MCF 10A (cell line): ENCODE measurements at regions of chr15 and their contacts with region 1.

Region 1: DNA sequence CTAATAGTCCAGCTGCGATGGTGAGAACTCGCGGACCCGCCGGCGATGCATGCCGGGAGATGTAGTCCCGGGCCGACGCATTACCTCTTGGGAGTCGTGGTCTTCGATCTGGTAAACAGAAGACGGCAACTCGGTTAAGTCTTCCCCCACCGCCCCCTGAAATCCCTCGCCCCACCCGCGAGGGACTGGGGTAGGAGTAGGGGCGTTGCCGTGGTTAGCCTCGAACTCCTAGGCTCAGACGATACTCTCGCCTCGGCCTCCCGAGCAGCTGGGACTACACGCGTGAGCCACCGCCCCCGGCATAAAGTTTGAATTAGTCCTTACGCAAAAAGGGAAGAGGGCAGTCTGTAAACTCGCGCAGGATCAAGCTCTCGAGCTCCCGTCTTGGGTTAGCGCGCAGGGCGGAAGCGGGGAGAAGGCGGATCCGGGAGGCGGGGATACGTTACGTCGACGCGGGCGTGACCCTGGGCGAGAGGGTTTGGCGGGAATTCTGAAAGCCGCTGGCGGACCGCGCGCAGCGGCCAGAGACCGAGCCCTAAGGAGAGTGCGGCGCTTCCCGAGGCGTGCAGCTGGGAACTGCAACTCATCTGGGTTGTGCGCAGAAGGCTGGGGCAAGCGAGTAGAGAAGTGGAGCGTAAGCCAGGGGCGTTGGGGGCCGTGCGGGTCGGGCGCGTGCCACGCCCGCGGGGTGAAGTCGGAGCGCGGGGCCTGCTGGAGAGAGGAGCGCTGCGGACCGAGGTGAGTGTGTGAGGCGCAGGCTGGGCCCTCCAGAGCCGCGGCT is at the start of gene RAD51:
- DNase-seq: peak; percentile 94
- H3K4me3 Mint-ChIP-seq: peak within 1 kb of the TSS; percentile 96
- H3K27ac Mint-ChIP-seq: peak within 1 kb of the TSS; percentile 98
- H3K4me1 Mint-ChIP-seq: peaks cover 11% of the 10 kb centered on the region
- H3K27me3 Mint-ChIP-seq: no peaks in the 10 kb centered on the region
- CTCF ChIP-seq: no peak
- total RNA-seq, gene RAD51: 6.1 and 7.1 TPM in 2 replicates

Region 2: GRCh38 chr15:40593588-40594428 is 101.1 kb before region 1 on chr15 and contains the start of gene KNL1:
- CTCF ChIA-PET with region 1: interaction called, 3 read pairs
- POLR2A ChIA-PET with region 1: interaction called, 13 read pairs
- intact Hi-C with region 1: loop called (anchors 5 kb)
- DNase-seq: peak; percentile 95
- H3K4me3 Mint-ChIP-seq: peak within 1 kb of the TSS; percentile 89
- H3K27ac Mint-ChIP-seq: peak within 1 kb of the TSS; percentile 100
- H3K4me1 Mint-ChIP-seq: peaks cover 11% of the 10 kb centered on the region
- H3K27me3 Mint-ChIP-seq: no peaks in the 10 kb centered on the region
- CTCF ChIP-seq: no peak
- total RNA-seq, gene KNL1: 7.9 and 11.4 TPM in 2 replicates

Region 3: DNA sequence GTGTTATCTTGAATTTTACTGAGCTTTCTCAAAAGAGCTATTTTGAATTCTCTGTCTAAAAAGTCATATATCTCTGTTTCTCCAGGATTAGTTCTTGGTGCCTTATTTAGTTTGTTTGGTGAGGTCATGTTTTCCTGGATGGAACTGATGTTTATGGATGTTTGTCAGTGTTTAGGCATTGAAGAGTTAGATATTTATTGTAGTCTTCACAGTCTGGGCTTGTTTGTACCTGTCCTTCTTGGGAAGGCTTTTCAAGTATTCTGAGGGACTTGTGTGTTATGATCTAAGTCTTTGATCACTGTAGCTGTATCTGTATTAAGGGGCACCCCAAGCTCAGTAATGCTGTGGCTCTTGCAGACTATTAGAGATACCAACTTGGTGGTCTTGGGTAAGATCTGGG is 10.5 kb before region 1 on chr15:
- CTCF ChIA-PET with region 1: interaction called, 17 read pairs
- POLR2A ChIA-PET with region 1: interaction called, 26 read pairs
- intact Hi-C with region 1: no loop called
- DNase-seq: no peak
- H3K4me3 Mint-ChIP-seq: no peak overlapping the region
- H3K27ac Mint-ChIP-seq: no peak overlapping the region
- H3K4me1 Mint-ChIP-seq: peaks cover under 1% of the 10 kb centered on the region
- H3K27me3 Mint-ChIP-seq: no peaks in the 10 kb centered on the region
- CTCF ChIP-seq: no peak

Region 4: DNA sequence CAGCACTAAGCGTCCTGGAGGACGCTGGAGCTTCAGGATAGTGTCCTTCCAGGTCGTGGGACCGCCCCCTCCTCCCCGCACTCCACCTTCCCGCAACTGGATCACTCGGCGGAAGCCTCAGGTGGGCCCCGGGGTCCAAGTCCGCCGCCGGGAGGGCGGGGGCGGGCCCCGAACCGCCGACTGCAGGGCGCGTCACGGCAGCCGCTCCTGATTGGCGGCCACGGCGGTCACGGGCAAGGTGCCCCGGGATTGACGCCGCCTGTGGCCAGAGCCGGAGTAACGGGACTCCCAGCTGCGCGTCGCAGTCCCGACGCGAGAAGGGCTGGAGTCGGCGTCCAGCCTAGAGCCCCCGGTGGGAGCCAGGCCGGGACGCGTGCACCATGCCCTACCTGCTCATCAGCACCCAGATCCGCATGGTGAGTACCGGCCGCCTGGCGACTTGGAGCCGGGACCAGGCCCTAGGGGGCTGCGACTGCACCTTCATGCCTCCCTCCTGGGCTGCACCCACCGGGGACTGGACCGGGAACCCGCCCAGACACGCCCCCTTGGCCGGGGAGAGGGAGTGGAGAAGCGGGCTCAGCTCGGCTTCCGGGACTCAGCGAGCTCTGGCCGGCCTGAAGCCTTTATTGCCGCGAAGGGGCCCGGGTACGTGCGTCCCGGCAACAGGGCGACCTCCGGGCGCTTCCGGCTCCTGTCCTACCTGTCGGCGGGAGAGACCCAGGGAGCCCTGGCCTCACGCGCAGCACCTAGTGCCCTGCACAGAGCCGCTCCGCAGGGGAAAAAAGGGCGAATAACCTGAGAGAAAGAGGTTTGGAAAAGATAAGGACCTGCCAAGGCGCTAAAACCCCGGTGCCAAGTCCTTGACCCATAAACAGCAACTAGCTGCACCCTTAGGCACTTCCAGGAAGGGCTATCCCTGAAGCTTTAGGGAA is 69.2 kb after region 1 on chr15 and contains the start of gene GCHFR:
- CTCF ChIA-PET with region 1: interaction called, 3 read pairs
- POLR2A ChIA-PET with region 1: interaction called, 18 read pairs
- intact Hi-C with region 1: no loop called
- DNase-seq: peak; percentile 78
- H3K4me3 Mint-ChIP-seq: peak within 1 kb of the TSS; percentile 68
- H3K27ac Mint-ChIP-seq: peak within 1 kb of the TSS; percentile 88
- H3K4me1 Mint-ChIP-seq: peaks cover 25% of the 10 kb centered on the region
- H3K27me3 Mint-ChIP-seq: no peaks in the 10 kb centered on the region
- CTCF ChIP-seq: no peak
- total RNA-seq, gene GCHFR: 7.2 and 8.2 TPM in 2 replicates